ENCODE measurements at regions of chr5 and their contacts with region 1.

Region 1: DNA sequence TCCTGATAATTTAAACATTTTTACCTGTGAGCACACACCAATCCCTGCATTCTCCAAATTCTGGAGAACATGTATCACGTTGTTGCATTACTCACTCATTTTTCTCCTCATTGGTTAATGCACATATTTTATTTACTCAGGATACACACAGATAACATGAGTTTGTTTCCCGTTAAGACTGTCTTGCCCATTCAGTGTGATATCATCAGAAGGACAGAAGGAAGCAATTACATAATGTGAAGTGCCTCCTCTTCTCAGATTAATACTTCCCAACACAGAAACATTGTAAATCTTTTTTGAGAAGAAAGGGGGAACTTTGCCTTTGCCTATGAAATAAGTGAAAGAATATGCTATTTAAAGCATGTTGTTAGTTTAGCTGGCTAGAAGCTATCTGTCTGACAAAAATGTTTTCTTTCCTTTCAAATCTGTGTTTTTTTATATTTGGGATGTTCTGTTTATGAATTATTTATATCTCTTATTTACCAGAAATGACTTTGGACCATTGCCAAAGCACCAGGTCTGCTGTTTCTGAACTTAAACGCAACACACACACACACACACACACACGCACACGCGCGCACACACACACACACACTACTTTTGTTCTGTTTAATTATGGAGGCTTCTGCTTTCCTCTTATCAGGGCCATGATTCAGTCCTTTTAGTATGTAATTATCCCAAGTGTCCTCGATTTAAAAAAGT is 186.5 kb downstream of the CHSY3 start:
- DNase-seq: no peak

Region 2: GRCh38 chr5:128546664-128547135 is 1544.0 kb before region 1 on chr5:
- intact Hi-C with region 1: loop called in 1 of 2 experiments (anchors 10 kb)
- DNase-seq: no peak

Region 3: DNA sequence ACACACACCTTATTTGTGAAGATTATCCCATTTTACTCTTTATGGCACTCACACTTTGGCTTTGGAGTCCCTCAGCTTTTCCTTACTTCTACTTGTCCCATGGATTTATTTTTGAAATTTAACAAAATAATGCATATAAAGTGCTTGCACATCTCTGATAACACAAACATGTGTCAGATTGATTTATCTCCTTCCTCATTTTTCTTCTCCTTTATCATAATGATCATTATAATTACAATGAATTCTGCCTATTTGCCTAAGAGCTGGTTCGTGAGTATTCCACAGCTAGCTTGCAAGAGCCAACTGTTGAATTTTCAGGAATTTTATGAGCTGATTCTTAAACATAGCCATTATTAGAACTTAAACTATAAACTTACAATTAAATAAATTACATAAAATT is 161.2 kb after region 1 on chr5:
- intact Hi-C with region 1: no loop called
- DNase-seq: no peak

Region 4: DNA sequence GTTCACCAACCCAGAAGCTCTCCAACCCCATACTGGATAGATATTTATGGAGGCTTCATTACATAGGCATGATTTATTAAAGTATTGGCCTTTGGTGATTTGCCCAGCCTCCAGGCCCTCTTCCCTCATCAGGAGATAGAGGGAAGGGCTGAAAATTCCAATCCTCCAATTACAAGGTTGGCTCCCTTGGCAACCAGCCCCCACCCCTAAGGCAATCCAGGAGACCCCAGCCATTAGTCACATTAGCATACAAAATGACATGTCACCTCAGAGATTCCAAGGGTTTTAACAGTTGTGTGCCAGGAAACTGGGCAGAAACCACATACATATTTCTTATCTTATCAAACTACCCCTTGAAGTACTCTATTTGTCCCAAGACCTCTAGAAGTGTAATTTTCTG is 864.3 kb after region 1 on chr5:
- intact Hi-C with region 1: no loop called
- DNase-seq: no peak

Measured in posterior vena cava (tissue), 2 donors.